Activated CD4-positive, alpha-beta T cell treated with anti-CD3 and anti-CD28 coated beads, Interleukin-2, amount 10 ng/mL, durations not matched to agents 24 days and 14 days (primary cell): ENCODE measurements at regions of chr16 and their contacts with region 1.

Region 1: DNA sequence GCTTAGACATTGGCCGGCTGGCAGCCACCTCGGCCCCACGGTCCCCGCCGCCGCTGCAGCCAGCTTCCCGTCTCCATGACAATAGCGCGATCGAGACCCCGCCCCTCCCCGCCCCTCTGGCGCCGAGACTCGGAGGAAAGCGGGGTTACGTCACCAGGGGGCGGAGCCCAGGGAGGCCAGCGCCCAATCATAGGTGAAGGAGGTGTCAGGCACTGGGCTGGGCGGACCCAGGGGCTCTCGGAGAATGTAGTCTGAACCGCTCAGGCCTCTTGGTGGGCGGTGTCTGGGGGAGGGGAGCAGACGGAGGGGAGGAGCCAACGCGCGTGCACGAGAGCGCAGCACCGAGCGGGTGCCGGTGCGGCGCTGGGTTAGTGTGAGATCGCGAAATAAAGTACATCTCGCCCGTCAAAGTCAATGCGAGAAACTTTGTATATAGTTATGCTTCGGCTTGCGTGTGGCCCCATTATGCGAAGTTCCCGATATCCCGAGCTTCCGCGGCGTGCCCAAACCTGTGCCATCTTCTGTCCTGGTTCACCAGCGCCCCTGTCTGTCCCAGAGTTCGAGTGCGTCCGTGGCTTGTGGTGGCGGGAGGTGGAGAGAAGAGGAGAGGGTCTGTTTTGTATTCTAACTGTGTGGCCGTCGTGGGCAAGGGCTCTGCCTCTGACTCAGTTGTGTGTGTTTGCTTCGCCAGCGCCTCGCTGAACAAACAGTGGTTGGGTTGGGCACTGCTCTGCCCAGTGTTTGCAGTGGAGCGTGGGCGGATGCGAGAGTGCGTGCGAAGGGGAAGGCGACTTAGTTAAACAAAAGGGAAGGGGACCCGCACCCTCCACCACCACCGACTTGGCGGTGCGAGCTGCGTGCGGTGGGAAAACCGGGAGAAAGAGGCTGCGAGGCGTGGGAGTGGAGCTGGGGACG is 1.3 kb upstream of the IRX5 start:
- DNase-seq: peak; percentile 97
- H3K4me3 Mint-ChIP-seq: peak overlapping the region; percentile 87
- H3K27ac Mint-ChIP-seq: peak overlapping the region; percentile 91
- H3K4me1 Mint-ChIP-seq: peaks cover 28% of the 10 kb centered on the region
- H3K27me3 Mint-ChIP-seq: peaks cover 64% of the 10 kb centered on the region

Region 2: DNA sequence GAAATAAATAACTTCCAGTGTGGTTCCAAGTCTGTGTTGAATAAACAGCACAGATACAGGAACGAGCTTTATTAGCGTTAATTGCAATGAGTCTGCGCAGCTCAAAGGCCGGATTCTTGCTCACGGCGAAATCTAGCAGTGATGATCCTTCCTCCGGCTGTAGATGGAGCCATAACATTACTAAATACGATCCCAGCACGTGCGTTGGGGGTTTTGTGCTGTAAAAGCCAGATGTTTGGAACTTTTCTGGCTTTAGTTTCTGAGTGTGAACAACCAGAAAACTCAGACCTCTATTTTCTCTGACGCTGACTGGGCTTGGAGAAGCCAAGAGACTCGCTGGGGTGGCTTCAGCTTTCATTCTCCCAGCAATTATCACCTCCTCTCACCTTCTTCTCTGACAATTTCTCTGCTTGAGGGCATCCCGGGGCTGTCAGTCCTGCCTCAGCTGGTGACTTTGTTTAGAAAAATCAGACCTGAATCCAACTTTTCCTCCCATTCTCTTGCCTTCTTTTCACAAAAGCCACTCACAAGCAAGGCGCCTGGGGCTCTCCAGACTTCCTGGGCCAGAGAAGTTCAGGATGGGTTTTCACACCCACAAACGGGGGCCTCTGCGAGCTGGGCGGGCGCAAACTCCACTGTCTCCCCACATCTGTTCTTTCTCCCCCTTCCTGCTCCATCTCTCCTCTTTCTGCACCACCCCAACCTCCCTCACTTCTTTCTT is 1379.2 kb before region 1 on chr16:
- intact Hi-C with region 1: loop called (anchors 1 kb)
- DNase-seq: peak; percentile 85
- H3K4me3 Mint-ChIP-seq: no peak overlapping the region
- H3K27ac Mint-ChIP-seq: no peak overlapping the region
- H3K4me1 Mint-ChIP-seq: peaks cover 26% of the 10 kb centered on the region
- H3K27me3 Mint-ChIP-seq: peaks cover 33% of the 10 kb centered on the region

Region 3: GRCh38 chr16:53892155-53892554 is 1037.2 kb before region 1 on chr16:
- intact Hi-C with region 1: loop called (anchors 5 kb)
- DNase-seq: peak; percentile 89
- H3K4me3 Mint-ChIP-seq: no peak overlapping the region
- H3K27ac Mint-ChIP-seq: peak overlapping the region; percentile 58
- H3K4me1 Mint-ChIP-seq: peaks cover 28% of the 10 kb centered on the region
- H3K27me3 Mint-ChIP-seq: no peaks in the 10 kb centered on the region

Region 4: GRCh38 chr16:54286090-54286993 is 643.0 kb before region 1 on chr16 and contains the start of gene IRX3:
- intact Hi-C with region 1: loop called (anchors 2 kb)
- DNase-seq: peak; percentile 73
- H3K4me3 Mint-ChIP-seq: peak within 1 kb of the TSS; percentile 89
- H3K27ac Mint-ChIP-seq: peak within 1 kb of the TSS; percentile 79
- H3K4me1 Mint-ChIP-seq: peaks cover 25% of the 10 kb centered on the region
- H3K27me3 Mint-ChIP-seq: peaks cover 72% of the 10 kb centered on the region
- total RNA-seq, gene IRX3: 0.43 and 1.4 TPM in 2 replicates

Region 5: GRCh38 chr16:54780266-54780665 is 149.1 kb before region 1 on chr16:
- intact Hi-C with region 1: no loop called
- DNase-seq: no peak
- H3K4me3 Mint-ChIP-seq: no peak overlapping the region
- H3K27ac Mint-ChIP-seq: no peak overlapping the region
- H3K4me1 Mint-ChIP-seq: no peaks in the 10 kb centered on the region
- H3K27me3 Mint-ChIP-seq: no peaks in the 10 kb centered on the region

Region 6: GRCh38 chr16:56191156-56191815 is 1261.9 kb after region 1 on chr16 and contains the start of gene GNAO1:
- intact Hi-C with region 1: loop called (anchors 10 kb)
- DNase-seq: peak; percentile 87
- H3K4me3 Mint-ChIP-seq: peak within 1 kb of the TSS; percentile 83
- H3K27ac Mint-ChIP-seq: peak within 1 kb of the TSS; percentile 66
- H3K4me1 Mint-ChIP-seq: peaks cover 28% of the 10 kb centered on the region
- H3K27me3 Mint-ChIP-seq: peaks cover 78% of the 10 kb centered on the region
- total RNA-seq, gene GNAO1: 2.0 and 2.3 TPM in 2 replicates